Activated naive CD4-positive, alpha-beta T cell treated with anti-CD3 and anti-CD28 coated beads for 36 hours (primary cell): ENCODE measurements at regions of chrX and their contacts with region 1.

Region 1: DNA sequence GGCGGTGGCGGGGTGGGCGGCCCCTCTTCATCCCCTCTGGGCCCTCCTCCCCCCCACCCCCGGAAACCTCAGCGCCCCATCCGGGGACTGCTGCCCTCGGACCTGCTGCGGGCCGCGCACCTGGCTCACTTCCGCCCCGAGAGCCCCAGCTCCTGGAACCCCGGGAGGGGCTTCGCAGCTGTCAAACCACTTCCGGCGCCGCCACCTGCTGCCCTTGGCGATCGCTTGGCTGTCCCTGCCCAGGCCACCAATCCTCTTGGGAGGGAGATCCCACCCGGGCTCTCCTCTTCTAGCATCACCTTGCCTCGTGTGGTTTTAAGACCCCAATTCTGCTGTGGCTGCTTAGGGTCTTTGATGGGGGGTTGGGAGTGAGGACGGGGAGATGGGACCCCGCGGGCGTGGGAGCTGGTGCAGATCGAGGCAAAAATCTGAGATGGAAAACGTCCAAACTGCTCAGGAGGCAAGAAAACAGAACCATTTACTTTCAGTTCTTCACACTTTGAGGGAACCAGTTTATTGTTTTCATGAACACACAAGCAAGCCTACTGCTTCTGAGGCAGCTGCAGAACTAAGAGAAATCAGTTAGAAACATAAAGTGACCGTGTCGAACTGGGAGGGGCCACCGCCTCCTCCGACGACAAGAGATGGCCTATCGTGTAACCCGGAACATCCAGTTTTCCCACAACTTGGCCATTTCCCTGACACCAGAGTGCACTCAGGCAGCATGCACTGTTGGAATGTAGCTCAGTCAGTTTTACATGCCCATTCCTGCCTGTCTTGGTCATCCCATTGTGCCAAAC is 779 bp downstream of the MTMR1 start:
- DNase-seq: peak; percentile 85
- H3K4me3 Mint-ChIP-seq: peak overlapping the region; percentile 90
- H3K27ac Mint-ChIP-seq: peak overlapping the region; percentile 97
- H3K4me1 Mint-ChIP-seq: peaks cover 64% of the 10 kb centered on the region
- H3K27me3 Mint-ChIP-seq: no peaks in the 10 kb centered on the region

Region 2: GRCh38 chrX:149539283-149540130 is 1154.5 kb before region 1 on chrX:
- CTCF ChIA-PET with region 1: no interaction called
- intact Hi-C with region 1: loop called (anchors 5 kb)
- DNase-seq: peak; percentile 92
- H3K4me3 Mint-ChIP-seq: peak overlapping the region; percentile 79
- H3K27ac Mint-ChIP-seq: peak overlapping the region; percentile 73
- H3K4me1 Mint-ChIP-seq: peaks cover 2% of the 10 kb centered on the region
- H3K27me3 Mint-ChIP-seq: no peaks in the 10 kb centered on the region

Region 3: GRCh38 chrX:150568320-150569154 is 125.4 kb before region 1 on chrX and contains the start of gene MTM1:
- CTCF ChIA-PET with region 1: interaction called, 3 read pairs
- intact Hi-C with region 1: loop called (anchors 1 kb)
- DNase-seq: peak; percentile 93
- H3K4me3 Mint-ChIP-seq: peak within 1 kb of the TSS; percentile 78
- H3K27ac Mint-ChIP-seq: peak within 1 kb of the TSS; percentile 97
- H3K4me1 Mint-ChIP-seq: peaks cover 32% of the 10 kb centered on the region
- H3K27me3 Mint-ChIP-seq: no peaks in the 10 kb centered on the region
- total RNA-seq, gene MTM1: 17.8 to 19.2 TPM

Region 4: GRCh38 chrX:150683536-150684146 is 10.3 kb before region 1 on chrX:
- CTCF ChIA-PET with region 1: interaction called, 13 read pairs
- intact Hi-C with region 1: no loop called
- DNase-seq: no peak
- H3K4me3 Mint-ChIP-seq: no peak overlapping the region
- H3K27ac Mint-ChIP-seq: no peak overlapping the region
- H3K4me1 Mint-ChIP-seq: peaks cover 11% of the 10 kb centered on the region
- H3K27me3 Mint-ChIP-seq: no peaks in the 10 kb centered on the region

Region 5: DNA sequence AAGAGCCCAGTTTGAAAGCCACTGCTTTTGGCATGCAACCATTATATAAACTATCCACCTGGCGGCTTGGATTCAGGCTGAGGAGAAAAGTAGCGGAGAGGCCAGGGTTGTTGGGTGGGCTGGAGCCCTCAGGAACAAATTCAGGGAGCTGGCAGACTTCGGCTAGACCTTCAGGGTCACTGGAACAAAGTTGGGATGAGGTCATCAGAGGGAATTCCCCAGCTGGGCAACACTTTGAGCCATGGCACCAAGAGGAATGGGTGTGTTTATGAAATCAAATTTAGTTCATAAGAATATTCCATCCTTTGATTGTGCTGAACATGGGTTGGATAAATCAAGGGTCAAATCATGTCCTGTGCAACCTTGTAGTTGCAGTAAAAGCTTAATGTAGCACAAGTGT is 21.2 kb after region 1 on chrX:
- CTCF ChIA-PET with region 1: interaction called, 15 read pairs
- intact Hi-C with region 1: no loop called
- DNase-seq: no peak
- H3K4me3 Mint-ChIP-seq: no peak overlapping the region
- H3K27ac Mint-ChIP-seq: no peak overlapping the region
- H3K4me1 Mint-ChIP-seq: peaks cover 35% of the 10 kb centered on the region
- H3K27me3 Mint-ChIP-seq: no peaks in the 10 kb centered on the region

Region 6: GRCh38 chrX:151396825-151397740 is 703.1 kb after region 1 on chrX and contains the start of gene VMA21:
- CTCF ChIA-PET with region 1: no interaction called
- intact Hi-C with region 1: loop called (anchors 2 kb)
- DNase-seq: peak; percentile 81
- H3K4me3 Mint-ChIP-seq: peak within 1 kb of the TSS; percentile 87
- H3K27ac Mint-ChIP-seq: peak within 1 kb of the TSS; percentile 96
- H3K4me1 Mint-ChIP-seq: peaks cover 48% of the 10 kb centered on the region
- H3K27me3 Mint-ChIP-seq: no peaks in the 10 kb centered on the region
- total RNA-seq, gene VMA21: 36.5 to 39.7 TPM